CD14-positive monocyte (primary cell): ENCODE measurements at regions of chr18 and their contacts with region 1.

Region 1: GRCh38 chr18:35240664-35241447 is at the start of gene ZNF397:
- DNase-seq: peak; percentile 96 to 98 (median 97)
- H3K4me3 ChIP-seq: peak within 1 kb of the TSS; percentile 74 to 88 (median 76)
- H3K4me3 Mint-ChIP-seq: peak within 1 kb of the TSS; percentile 93 to 97
- H3K27ac ChIP-seq: peak within 1 kb of the TSS; percentile 96
- H3K27ac Mint-ChIP-seq: peak within 1 kb of the TSS; percentile 96 to 100 (median 99)
- H3K4me1 ChIP-seq: peaks cover 3 to 15% of the 10 kb centered on the region in 2 donors
- H3K4me1 Mint-ChIP-seq: peaks cover 5% of the 10 kb centered on the region
- H3K27me3 ChIP-seq: no peaks in the 10 kb centered on the region
- H3K27me3 Mint-ChIP-seq: no peaks in the 10 kb centered on the region
- CTCF ChIP-seq: no peak
- polyA plus RNA-seq, gene ZNF397: 3.6 to 6.6 (median 3.6) TPM

Region 2: GRCh38 chr18:34990571-34990970 is 250.3 kb before region 1 on chr18:
- intact Hi-C with region 1: no loop called
- DNase-seq: no peak
- H3K4me3 ChIP-seq: no peak overlapping the region
- H3K4me3 Mint-ChIP-seq: no peak overlapping the region
- H3K27ac ChIP-seq: no peak overlapping the region
- H3K27ac Mint-ChIP-seq: no peak overlapping the region
- H3K4me1 ChIP-seq: peaks cover 15 to 18% of the 10 kb centered on the region in 2 donors
- H3K4me1 Mint-ChIP-seq: peaks cover 21% of the 10 kb centered on the region
- H3K27me3 ChIP-seq: no peaks in the 10 kb centered on the region
- H3K27me3 Mint-ChIP-seq: peaks cover 0 to 2% (median 1%) of the 10 kb centered on the region in 3 donors
- CTCF ChIP-seq: no peak

Region 3: DNA sequence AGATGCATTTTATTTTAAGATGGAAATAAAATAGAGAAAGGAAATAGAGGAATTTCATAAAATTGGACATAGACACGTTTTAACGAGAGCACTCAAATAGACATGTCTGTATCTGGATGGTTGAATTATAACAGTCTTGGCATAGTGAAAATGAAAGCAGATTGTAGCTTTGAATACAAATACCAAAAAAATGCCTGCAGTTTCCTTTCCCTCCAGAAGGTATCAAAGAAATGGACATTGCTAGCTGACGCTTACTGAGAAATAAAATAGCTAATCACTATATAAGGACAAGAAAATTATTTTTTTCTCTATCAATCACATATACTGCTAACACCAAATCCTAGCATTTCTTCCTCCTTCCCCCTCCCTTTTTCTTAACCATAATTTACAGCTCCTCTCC is 211.1 kb before region 1 on chr18:
- intact Hi-C with region 1: loop called in 1 of 2 experiments (anchors 10 kb)
- DNase-seq: peak in 1 of 3 donors; percentile 34
- H3K4me3 ChIP-seq: peak overlapping the region; percentile 34 to 91 (median 78)
- H3K4me3 Mint-ChIP-seq: peak overlapping the region; percentile 81 to 92
- H3K27ac ChIP-seq: peak overlapping the region in 1 of 2 donors; percentile 82
- H3K27ac Mint-ChIP-seq: peak overlapping the region; percentile 60 to 95 (median 83)
- H3K4me1 ChIP-seq: peaks cover 11 to 15% of the 10 kb centered on the region in 2 donors
- H3K4me1 Mint-ChIP-seq: peaks cover 18% of the 10 kb centered on the region
- H3K27me3 ChIP-seq: no peaks in the 10 kb centered on the region
- H3K27me3 Mint-ChIP-seq: peaks cover 0 to 3% (median 0%) of the 10 kb centered on the region in 3 donors
- CTCF ChIP-seq: peak; percentile 21

Region 4: GRCh38 chr18:35277633-35278032 is 36.8 kb after region 1 on chr18:
- intact Hi-C with region 1: no loop called
- DNase-seq: no peak
- H3K4me3 ChIP-seq: no peak overlapping the region
- H3K4me3 Mint-ChIP-seq: no peak overlapping the region
- H3K27ac ChIP-seq: no peak overlapping the region
- H3K27ac Mint-ChIP-seq: no peak overlapping the region
- H3K4me1 ChIP-seq: no peaks in the 10 kb centered on the region
- H3K4me1 Mint-ChIP-seq: no peaks in the 10 kb centered on the region
- H3K27me3 ChIP-seq: no peaks in the 10 kb centered on the region
- H3K27me3 Mint-ChIP-seq: peaks cover 0 to 4% (median 0%) of the 10 kb centered on the region in 3 donors
- CTCF ChIP-seq: no peak

Region 5: DNA sequence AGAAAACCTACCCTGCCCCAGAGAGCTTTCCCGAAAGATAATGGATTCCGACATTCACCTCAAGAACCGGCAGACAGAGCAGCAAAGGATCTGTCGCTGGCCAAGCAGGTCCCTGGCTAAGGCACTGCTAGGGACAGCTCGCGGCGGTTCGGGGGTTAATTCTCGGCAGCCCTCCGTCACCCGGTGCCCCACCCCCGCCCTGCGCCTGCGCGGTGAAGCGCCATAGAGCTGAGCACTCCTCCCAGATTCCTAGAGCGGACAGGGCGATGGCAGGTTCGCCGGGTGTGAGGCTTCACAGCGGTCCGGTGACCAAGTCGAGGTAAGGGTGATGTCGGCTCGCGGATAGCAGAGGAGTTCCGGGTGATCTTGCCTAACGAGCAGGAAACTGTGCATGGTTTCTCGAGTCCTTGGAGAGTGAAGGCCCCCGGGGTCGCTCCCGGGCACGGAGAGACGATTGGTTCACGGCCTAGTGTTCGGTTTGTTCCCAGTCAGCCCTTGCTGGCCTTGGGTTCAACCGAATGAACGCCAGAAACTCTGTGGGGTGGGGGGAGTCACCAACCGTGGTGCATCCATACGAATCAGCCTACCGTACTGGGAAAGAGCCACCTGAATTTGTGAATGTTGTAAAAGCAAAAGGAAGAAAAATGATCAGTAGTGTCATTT is 49.3 kb after region 1 on chr18 and contains the start of gene ZSCAN30:
- intact Hi-C with region 1: loop called (anchors 2 kb)
- DNase-seq: peak; percentile 90 to 96 (median 93)
- H3K4me3 ChIP-seq: peak within 1 kb of the TSS; percentile 86 to 99 (median 96)
- H3K4me3 Mint-ChIP-seq: peak within 1 kb of the TSS; percentile 97 to 99
- H3K27ac ChIP-seq: peak within 1 kb of the TSS; percentile 66 to 89
- H3K27ac Mint-ChIP-seq: peak within 1 kb of the TSS; percentile 95 to 99 (median 97)
- H3K4me1 ChIP-seq: peaks cover 21 to 22% of the 10 kb centered on the region in 2 donors
- H3K4me1 Mint-ChIP-seq: peaks cover 29% of the 10 kb centered on the region
- H3K27me3 ChIP-seq: no peaks in the 10 kb centered on the region
- H3K27me3 Mint-ChIP-seq: peaks cover 0 to 4% (median 2%) of the 10 kb centered on the region in 3 donors
- CTCF ChIP-seq: no peak
- polyA plus RNA-seq, gene ZSCAN30: 1.3 to 3.2 (median 1.7) TPM

Region 6: DNA sequence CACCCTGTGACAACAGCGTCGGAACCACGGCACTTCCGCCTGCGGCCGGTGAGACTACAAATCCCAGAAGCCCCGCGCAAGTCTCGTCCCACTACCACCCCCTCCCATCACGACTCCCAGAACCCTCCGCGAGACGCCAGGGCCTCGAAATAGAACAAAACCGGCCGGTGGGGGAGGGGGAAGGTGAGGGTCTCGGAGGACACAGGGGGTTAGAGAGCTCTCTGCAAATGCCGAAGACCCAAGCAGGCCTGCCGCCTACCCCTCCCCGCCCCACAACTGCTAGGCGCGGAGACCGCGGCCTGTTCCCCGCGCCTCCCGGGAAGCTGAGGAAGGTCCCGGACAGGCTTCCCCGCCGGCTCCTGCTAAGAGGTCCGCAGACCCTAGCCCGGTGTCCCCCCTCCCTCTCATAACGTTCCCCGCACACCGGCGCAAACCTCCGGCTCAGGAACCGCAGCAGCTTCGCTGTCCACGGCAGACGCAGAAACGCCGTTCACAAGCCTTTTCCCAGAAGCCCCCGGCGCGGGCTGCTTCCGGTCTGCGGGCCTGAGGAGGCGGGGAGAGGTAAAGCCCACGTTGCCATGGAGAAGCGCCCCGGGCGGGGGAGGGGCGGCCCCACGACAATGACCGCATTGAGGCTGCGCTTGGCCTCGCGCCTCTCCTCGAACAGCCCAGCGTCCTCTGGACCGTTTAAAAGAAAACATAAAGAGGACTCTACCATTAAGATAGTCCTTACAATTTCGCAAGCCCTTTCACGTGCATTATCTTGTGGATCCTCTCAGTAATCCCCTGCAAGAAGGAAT is 103.3 kb after region 1 on chr18 and contains the start of gene ZNF24:
- intact Hi-C with region 1: loop called (anchors 2 kb)
- DNase-seq: peak; percentile 91 to 94 (median 93)
- H3K4me3 ChIP-seq: peak within 1 kb of the TSS; percentile 74 to 87 (median 84)
- H3K4me3 Mint-ChIP-seq: peak within 1 kb of the TSS; percentile 91 to 92
- H3K27ac ChIP-seq: peak within 1 kb of the TSS; percentile 96 to 98
- H3K27ac Mint-ChIP-seq: peak within 1 kb of the TSS; percentile 92 to 99 (median 98)
- H3K4me1 ChIP-seq: peaks cover 29 to 37% of the 10 kb centered on the region in 2 donors
- H3K4me1 Mint-ChIP-seq: peaks cover 46% of the 10 kb centered on the region
- H3K27me3 ChIP-seq: no peaks in the 10 kb centered on the region
- H3K27me3 Mint-ChIP-seq: peaks cover 0 to 1% (median 0%) of the 10 kb centered on the region in 3 donors
- CTCF ChIP-seq: no peak
- polyA plus RNA-seq, gene ZNF24: 12.9 to 64.4 (median 54.3) TPM

Region 7: GRCh38 chr18:35376742-35377695 is 136.2 kb after region 1 on chr18 and contains the start of gene ZNF396:
- intact Hi-C with region 1: loop called in 1 of 2 experiments (anchors 10 kb)
- DNase-seq: peak; percentile 73 to 90 (median 83)
- H3K4me3 ChIP-seq: peak within 1 kb of the TSS; percentile 60 to 88 (median 81)
- H3K4me3 Mint-ChIP-seq: peak within 1 kb of the TSS; percentile 84 to 87
- H3K27ac ChIP-seq: peak within 1 kb of the TSS in 1 of 2 donors; percentile 85
- H3K27ac Mint-ChIP-seq: peak within 1 kb of the TSS; percentile 65 to 90 (median 80)
- H3K4me1 ChIP-seq: peaks cover 11 to 16% of the 10 kb centered on the region in 2 donors
- H3K4me1 Mint-ChIP-seq: peaks cover 17% of the 10 kb centered on the region
- H3K27me3 ChIP-seq: no peaks in the 10 kb centered on the region
- H3K27me3 Mint-ChIP-seq: peaks cover 3 to 5% (median 4%) of the 10 kb centered on the region in 3 donors
- CTCF ChIP-seq: no peak
- polyA plus RNA-seq, gene ZNF396: 1.0 to 1.9 (median 1.1) TPM

Region 8: DNA sequence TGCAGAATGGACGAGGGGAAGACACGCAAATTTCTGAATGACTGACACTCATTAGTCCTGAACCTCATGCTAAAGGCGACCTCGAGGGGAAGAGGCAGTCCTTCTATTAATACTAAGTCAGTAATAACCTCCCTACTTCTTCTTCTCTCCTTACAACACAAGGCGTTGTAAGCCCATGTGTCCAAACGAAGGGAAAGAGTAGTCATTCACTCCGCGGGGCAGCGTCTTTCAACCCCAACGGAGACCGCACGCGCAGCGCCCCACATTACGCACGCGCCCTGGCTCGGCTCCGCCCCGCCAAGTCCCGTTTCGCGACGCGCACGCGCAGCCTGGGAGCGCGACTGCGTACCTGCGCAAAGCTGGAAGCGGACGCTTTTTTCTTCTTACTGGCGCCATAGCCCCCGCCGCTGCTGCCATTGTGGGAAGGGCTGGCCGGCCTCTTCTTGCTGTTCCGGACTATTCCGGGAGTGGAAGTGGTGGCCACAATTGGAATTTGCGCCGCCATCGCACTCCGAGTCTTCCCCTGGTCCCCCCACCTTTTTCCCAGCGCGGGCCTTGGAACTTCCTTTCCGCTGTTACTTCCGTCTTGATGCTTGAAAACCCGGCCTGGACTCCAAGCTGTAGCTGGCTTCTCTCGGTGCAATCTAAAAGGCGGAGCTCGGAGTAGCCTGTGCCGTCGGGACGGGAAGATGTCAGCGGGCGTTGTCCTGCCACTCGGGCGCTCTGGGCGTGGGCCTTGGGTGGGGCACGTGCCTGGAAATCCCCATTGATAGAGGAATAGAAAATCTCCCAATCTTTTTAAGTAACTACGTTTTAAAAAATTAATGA is 256.7 kb after region 1 on chr18 and contains the start of gene INO80C:
- intact Hi-C with region 1: loop called in 1 of 2 experiments (anchors 10 kb)
- DNase-seq: peak; percentile 97 to 99 (median 98)
- H3K4me3 ChIP-seq: peak within 1 kb of the TSS; percentile 56 to 83 (median 72)
- H3K4me3 Mint-ChIP-seq: peak within 1 kb of the TSS; percentile 95 to 98
- H3K27ac ChIP-seq: peak within 1 kb of the TSS; percentile 92 to 98
- H3K27ac Mint-ChIP-seq: peak within 1 kb of the TSS; percentile 96 to 100 (median 100)
- H3K4me1 ChIP-seq: peaks cover 48 to 54% of the 10 kb centered on the region in 2 donors
- H3K4me1 Mint-ChIP-seq: peaks cover 62% of the 10 kb centered on the region
- H3K27me3 ChIP-seq: no peaks in the 10 kb centered on the region
- H3K27me3 Mint-ChIP-seq: peaks cover 0 to 8% (median 3%) of the 10 kb centered on the region in 3 donors
- CTCF ChIP-seq: no peak
- polyA plus RNA-seq, gene INO80C: 17.7 to 27.9 (median 22.3) TPM

Region 9: DNA sequence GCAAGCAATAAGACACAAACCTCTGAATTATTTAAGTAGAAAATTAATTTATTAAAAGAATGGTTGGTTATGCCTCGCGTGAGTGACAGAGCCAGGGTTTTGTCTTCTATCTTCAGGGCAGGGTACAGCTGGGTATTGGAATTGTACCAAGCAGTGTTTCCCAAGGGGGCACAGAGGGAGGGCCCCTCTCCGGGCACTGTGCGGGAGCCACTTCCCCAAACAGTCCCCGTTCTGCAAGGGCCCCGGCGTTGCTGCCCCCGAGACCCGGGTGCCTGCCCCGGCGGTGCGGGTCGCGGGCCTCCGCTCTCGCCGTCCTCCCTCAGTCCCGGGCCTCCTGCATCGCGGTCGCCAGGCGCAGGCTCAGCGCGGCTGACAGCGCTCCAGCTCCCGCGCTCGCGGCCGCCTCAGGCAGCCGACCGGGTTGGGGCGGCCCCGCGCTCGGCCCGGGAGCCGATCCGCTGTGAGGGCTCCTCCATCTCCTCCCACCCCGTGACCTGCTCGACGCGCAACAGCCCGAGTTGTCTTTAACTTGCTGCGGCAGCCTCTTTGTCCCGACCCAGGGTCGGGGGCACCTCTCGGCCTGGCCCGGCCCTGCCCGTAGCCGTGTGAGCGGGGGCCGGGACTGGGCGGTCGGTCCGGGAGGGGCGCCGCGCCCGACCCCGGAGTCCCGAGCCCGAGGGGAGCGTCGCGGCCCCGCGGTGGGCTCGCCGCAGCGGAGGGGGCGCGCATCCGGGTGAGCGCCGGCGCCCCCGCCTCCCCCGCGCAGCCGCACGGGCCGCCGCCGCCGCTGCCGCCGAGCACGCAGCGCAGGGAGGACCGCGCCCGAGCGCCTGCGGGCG is 340.1 kb after region 1 on chr18:
- intact Hi-C with region 1: no loop called
- DNase-seq: peak; percentile 49 to 53 (median 52)
- H3K4me3 ChIP-seq: peak overlapping the region; percentile 46 to 75 (median 70)
- H3K4me3 Mint-ChIP-seq: peak overlapping the region; percentile 76 to 83
- H3K27ac ChIP-seq: peak overlapping the region in 1 of 2 donors; percentile 78
- H3K27ac Mint-ChIP-seq: peak overlapping the region in 3 of 7 donors; percentile 54 to 76 (median 69)
- H3K4me1 ChIP-seq: peaks cover 16 to 24% of the 10 kb centered on the region in 2 donors
- H3K4me1 Mint-ChIP-seq: peaks cover 29% of the 10 kb centered on the region
- H3K27me3 ChIP-seq: peaks cover 0 to 2% of the 10 kb centered on the region in 2 donors
- H3K27me3 Mint-ChIP-seq: peaks cover 0 to 1% (median 1%) of the 10 kb centered on the region in 3 donors
- CTCF ChIP-seq: no peak

Region 10: DNA sequence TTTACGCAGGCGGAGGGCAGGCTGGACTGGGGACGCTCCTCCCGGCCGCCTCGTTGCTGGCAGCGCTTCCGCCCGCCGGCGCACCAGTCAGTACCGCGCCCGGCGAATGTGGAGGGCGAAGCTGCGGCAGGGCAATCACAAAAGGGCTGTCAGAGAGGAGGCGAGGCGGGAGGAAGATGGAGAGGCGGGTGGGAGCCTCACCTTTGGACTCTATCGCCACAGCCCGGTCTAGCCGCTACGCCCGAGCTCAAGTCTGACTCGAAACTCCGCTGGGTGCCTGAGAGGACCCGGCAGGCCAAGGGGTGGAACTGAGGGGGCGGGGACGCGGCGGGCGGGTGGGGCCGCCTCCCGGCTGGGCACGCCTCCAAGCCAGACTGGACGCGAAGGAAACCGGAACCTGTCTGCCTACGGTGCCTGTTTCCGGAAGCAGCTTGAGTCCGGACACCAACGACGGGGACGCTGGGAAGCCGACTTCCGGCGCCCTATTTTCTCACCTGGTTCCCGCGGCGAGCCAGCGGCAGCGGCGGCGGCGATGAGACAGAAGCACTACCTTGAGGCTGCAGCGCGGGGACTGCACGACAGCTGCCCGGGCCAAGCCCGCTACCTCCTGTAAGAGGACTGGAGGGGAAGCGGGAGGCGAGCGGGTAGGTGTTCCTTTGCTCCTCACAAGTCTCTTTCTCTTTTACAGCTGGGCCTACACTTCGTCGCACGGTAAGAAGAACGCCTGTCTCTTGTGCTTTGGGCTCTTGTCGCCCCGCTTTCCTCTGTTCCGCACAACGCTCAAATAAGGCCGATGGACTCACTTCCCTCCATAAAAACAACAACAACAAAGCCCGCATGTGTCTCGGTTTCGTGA is 731.6 kb after region 1 on chr18 and contains the start of gene RMP24:
- intact Hi-C with region 1: loop called in 1 of 2 experiments (anchors 10 kb)
- DNase-seq: peak; percentile 91 to 94 (median 92)
- H3K4me3 ChIP-seq: peak within 1 kb of the TSS; percentile 85 to 91 (median 88)
- H3K4me3 Mint-ChIP-seq: peak within 1 kb of the TSS; percentile 98 to 99
- H3K27ac ChIP-seq: peak within 1 kb of the TSS; percentile 77 to 88
- H3K27ac Mint-ChIP-seq: peak within 1 kb of the TSS; percentile 94 to 99 (median 97)
- H3K4me1 ChIP-seq: peaks cover 25 to 41% of the 10 kb centered on the region in 2 donors
- H3K4me1 Mint-ChIP-seq: peaks cover 41% of the 10 kb centered on the region
- H3K27me3 ChIP-seq: no peaks in the 10 kb centered on the region
- H3K27me3 Mint-ChIP-seq: no peaks in the 10 kb centered on the region
- CTCF ChIP-seq: no peak